GM13977 (cell line): ENCODE measurements at regions of chr1 and their contacts with region 1.

Region 1: GRCh38 chr1:96966536-96967138 is 245.1 kb downstream of the PTBP2 start:
- DNase-seq: peak; percentile 38
- CTCF ChIP-seq: peak; percentile 93

Region 2: GRCh38 chr1:96346708-96347107 is 619.9 kb before region 1 on chr1:
- in situ Hi-C with region 1: no loop called
- DNase-seq: no peak
- CTCF ChIP-seq: no peak

Region 3: GRCh38 chr1:96808191-96808590 is 158.4 kb before region 1 on chr1:
- in situ Hi-C with region 1: no loop called
- DNase-seq: no peak
- CTCF ChIP-seq: no peak

Region 4: GRCh38 chr1:98053471-98054366 is 1087.1 kb after region 1 on chr1:
- in situ Hi-C with region 1: loop called (anchors 25 kb)
- DNase-seq: peak; percentile 79
- CTCF ChIP-seq: peak; percentile 95

Region 5: DNA sequence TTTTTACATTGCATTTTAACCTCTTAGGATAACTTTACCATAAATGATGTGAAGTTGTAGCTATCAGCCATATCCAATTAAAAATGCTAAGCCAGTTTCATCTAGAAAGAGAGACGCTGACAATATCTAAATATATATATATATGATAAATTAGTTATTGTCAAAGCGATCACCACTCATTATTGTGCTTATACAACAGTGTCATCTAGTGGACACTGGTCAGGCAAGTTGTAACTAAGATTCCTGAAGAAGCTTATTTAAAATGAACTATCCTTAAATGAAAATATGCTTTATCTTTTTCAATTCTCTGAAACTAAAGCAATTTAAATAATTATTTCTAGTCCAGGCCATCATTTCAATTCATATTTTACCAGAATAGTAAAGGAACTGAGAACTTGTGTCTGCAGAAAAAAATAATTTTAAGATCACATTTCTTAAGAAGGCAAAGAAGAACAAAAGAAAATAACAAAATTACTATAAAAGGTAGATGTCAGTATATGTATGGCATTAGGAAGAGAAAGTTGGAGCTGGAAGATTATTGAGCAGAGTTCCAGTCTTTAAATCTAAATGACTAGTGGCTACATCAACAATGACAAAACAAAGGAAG is 1501.6 kb after region 1 on chr1:
- in situ Hi-C with region 1: loop called (anchors 25 kb)
- DNase-seq: peak; percentile 1
- CTCF ChIP-seq: peak; percentile 54